Dendritic cell treated with granulocyte-macrophage colony-stimulating factor and Interleukin-4, amounts not matched to agents 40 ng/mL and 50 ng/mL, for 4 days (primary cell): ENCODE measurements at regions of chr10 and their contacts with region 1.

Region 1: DNA sequence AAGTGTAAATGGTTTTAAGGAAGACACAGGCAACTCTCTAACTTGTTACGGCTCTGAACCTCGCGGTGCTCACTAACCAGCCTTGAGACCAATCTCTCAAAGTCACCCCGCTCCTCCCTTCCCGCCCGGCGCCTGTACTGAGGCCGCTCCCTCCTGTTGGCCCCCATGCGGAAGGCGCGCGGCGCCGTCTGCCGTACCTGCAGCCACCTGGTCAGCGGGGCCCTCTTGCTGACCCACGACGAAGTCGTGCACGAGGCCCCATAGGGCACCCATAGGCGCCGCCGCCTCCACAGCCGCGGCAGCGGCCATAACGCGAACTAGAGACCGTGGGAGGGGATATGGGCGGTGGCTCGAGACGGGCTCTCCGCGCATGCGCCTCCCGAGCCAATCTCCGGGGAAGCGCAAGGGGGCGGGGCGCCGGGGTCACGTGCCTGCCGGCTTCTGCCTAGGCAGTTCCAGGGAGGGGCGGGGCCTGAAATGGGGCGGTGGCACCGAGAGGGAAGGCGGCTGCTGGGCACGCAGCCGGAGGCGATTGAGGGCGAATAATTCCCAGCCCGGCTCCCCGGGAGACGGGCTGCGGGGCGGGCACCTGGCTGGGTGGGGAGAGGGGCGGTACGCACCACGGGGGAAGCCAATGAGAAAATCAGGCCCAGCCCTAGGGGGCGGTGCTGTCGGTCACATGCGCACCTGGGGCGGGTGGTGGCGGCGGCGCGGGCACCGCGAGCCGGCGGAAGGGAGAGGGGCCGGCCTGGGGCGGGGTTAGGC is at the start of gene MMS19:
- H3K4me3 Mint-ChIP-seq: peak within 1 kb of the TSS; percentile 98
- H3K27ac Mint-ChIP-seq: peak within 1 kb of the TSS; percentile 99
- H3K4me1 Mint-ChIP-seq: peaks cover 55% of the 10 kb centered on the region
- H3K27me3 Mint-ChIP-seq: peaks cover 3% of the 10 kb centered on the region

Region 2: GRCh38 chr10:97400665-97401454 is 97.4 kb before region 1 on chr10 and contains the start of gene RRP12:
- intact Hi-C with region 1: loop called (anchors 10 kb)
- H3K4me3 Mint-ChIP-seq: peak within 1 kb of the TSS; percentile 94
- H3K27ac Mint-ChIP-seq: peak within 1 kb of the TSS; percentile 98
- H3K4me1 Mint-ChIP-seq: peaks cover 34% of the 10 kb centered on the region
- H3K27me3 Mint-ChIP-seq: no peaks in the 10 kb centered on the region

Region 3: GRCh38 chr10:97425964-97426775 is 72.1 kb before region 1 on chr10 and contains the start of gene PGAM1:
- intact Hi-C with region 1: loop called (anchors 5 kb)
- H3K4me3 Mint-ChIP-seq: peak within 1 kb of the TSS; percentile 84
- H3K27ac Mint-ChIP-seq: peak within 1 kb of the TSS; percentile 83
- H3K4me1 Mint-ChIP-seq: peaks cover 41% of the 10 kb centered on the region
- H3K27me3 Mint-ChIP-seq: no peaks in the 10 kb centered on the region

Region 4: GRCh38 chr10:97445722-97446639 is 52.3 kb before region 1 on chr10 and contains the starts of genes EXOSC1 and ZDHHC16:
- intact Hi-C with region 1: loop called (anchors 5 kb)
- H3K4me3 Mint-ChIP-seq: peak within 1 kb of the TSS; percentile 98
- H3K27ac Mint-ChIP-seq: peak within 1 kb of the TSS; percentile 85
- H3K4me1 Mint-ChIP-seq: peaks cover 34% of the 10 kb centered on the region
- H3K27me3 Mint-ChIP-seq: no peaks in the 10 kb centered on the region

Region 5: DNA sequence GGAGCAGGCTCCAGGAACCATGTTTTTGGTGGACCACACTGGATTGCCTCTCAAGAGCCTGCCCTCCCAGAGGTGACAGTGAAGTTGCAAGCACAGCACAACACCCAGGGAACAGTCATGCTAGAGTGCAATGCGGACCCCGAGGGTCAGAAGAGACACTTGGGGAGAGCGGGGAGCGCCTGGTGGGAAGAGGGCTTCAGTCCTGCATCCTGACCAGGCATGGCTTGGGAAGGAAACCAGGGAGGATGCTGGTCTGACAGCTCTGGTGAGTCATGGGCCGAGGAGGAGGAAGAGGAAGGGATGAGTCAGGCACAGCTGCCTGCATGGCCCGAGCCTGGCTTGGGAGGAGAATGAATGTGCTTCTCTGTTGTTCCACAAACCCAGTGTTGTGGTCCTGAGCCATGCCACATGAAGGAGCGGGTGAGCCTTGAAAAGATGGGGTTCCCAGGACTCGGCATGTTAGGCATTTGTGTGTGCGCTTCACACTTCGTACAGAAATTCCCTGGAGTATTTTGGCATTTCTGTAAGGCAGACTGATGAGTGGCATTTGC is 44.8 kb after region 1 on chr10:
- intact Hi-C with region 1: loop called (anchors 5 kb)
- H3K4me3 Mint-ChIP-seq: peak overlapping the region; percentile 11
- H3K27ac Mint-ChIP-seq: peak overlapping the region; percentile 87
- H3K4me1 Mint-ChIP-seq: peaks cover 79% of the 10 kb centered on the region
- H3K27me3 Mint-ChIP-seq: no peaks in the 10 kb centered on the region

Region 6: DNA sequence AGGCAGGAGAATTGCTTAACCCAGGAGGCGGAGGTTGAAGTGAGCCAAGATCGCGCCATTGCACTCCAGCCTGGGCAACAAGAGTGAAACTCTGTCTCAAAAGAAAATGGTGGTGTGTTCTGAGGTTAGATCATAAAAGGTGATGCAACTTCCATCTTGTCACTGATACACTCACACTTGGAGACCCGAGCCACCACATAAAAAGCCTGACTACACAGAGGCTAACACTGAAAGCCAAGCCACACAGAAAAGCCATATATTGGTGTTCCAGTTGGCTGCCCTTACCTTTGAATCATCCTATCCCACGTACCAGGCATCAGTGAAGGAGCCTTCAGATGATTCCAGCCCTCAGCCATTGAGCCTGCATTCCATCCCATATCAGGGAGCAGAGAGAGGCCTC is 131.0 kb after region 1 on chr10:
- intact Hi-C with region 1: loop called (anchors 10 kb)
- H3K4me3 Mint-ChIP-seq: no peak overlapping the region
- H3K27ac Mint-ChIP-seq: no peak overlapping the region
- H3K4me1 Mint-ChIP-seq: peaks cover 13% of the 10 kb centered on the region
- H3K27me3 Mint-ChIP-seq: peaks cover 2% of the 10 kb centered on the region

Region 7: DNA sequence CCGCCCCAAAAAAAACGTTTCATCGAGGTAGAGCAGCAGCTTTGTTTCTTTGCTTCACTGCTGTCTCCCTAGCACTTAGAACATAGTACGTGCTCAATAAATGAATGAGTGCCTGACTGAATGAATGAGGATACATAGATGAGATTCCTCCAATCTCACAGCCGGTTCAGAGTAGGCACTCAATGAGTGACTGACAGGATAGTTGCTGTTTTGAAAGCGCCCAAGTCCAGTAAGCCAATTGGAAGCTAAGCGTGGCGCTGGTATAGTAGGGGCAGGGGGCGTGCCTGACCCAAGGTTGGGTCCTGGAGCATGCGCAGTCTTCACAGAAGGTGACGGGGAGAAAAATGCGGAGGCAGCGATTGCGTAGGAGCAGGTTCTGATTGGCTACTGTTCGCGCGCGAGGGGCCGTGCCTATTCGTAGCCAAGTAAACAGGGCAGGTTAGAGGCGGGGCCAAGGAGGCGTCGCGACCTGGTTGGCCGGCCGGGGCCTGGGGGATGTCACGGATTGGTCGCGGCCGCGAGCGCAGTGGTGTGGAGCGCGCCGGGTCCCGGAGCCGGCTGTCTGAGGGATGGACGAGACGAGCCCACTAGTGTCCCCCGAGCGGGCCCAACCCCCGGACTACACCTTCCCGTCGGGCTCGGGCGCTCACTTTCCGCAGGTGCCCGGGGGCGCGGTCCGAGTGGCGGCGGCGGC is 142.1 kb after region 1 on chr10 and contains the start of gene PI4K2A:
- intact Hi-C with region 1: loop called (anchors 10 kb)
- H3K4me3 Mint-ChIP-seq: peak within 1 kb of the TSS; percentile 95
- H3K27ac Mint-ChIP-seq: peak within 1 kb of the TSS; percentile 97
- H3K4me1 Mint-ChIP-seq: peaks cover 36% of the 10 kb centered on the region
- H3K27me3 Mint-ChIP-seq: peaks cover 1% of the 10 kb centered on the region